Endothelial cell of umbilical vein (primary cell): ENCODE measurements at regions of chr9 and their contacts with region 1.

Region 1: DNA sequence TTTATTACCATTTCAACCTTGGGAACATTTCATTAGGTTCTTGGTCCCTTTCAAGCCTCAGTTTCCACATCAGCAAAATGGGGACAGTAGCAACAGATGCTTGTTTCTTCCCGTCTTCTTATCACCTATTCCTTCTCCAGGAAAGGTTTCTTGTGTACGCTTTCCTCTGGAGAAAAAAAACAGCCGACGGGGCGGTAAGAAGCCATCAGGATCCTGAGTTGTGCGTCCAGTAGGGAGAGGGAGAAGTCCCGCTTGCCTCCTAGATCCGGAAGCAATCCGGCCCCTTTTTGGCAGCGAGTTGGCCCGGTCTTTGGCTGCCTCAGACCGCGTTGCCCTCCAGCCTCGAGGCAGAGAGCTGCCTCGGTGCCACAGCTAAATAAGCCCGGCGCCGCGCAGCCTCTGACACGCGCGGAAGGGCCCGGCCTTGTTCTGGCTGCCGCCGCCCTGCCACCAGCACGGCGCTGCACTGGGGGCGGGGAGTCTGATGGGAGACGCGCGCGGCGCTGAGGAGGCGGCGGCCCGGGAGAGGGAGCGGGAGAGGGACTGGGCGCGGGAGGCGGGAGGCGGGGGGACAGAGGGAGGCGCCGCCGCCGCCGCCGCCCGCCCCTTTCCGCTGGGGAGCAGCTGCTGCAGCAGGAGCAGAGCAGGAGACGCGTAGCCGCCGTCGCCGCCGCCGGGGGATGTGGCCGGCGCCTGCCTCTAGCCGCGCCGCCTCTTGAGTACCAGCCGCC is at the start of gene SLC44A1:
- DNase-seq: peak; percentile 96
- H3K4me3 ChIP-seq: peak within 1 kb of the TSS; percentile 69 to 90 (median 72)
- H3K27ac ChIP-seq: peak within 1 kb of the TSS; percentile 95
- H3K4me1 ChIP-seq: peaks cover 28% of the 10 kb centered on the region
- H3K27me3 ChIP-seq: no peaks in the 10 kb centered on the region
- CTCF ChIP-seq: no peak
- POLR2A ChIP-seq: peak; percentile 62
- total RNA-seq, gene SLC44A1: 35.3 and 37.7 TPM in 2 replicates

Region 2: GRCh38 chr9:104765138-104765537 is 479.0 kb before region 1 on chr9:
- CTCF ChIA-PET with region 1: no interaction called
- POLR2A ChIA-PET with region 1: no interaction called
- dilution Hi-C with region 1: no loop called
- intact Hi-C with region 1: loop called (anchors 5 kb)
- DNase-seq: no peak
- H3K4me3 ChIP-seq: no peak overlapping the region
- H3K27ac ChIP-seq: no peak overlapping the region
- H3K4me1 ChIP-seq: peaks cover 6% of the 10 kb centered on the region
- H3K27me3 ChIP-seq: no peaks in the 10 kb centered on the region
- CTCF ChIP-seq: no peak
- POLR2A ChIP-seq: no peak

Region 3: GRCh38 chr9:104991144-104991953 is 252.8 kb before region 1 on chr9:
- CTCF ChIA-PET with region 1: no interaction called
- POLR2A ChIA-PET with region 1: no interaction called
- dilution Hi-C with region 1: no loop called
- intact Hi-C with region 1: loop called (anchors 5 kb)
- DNase-seq: peak; percentile 83
- H3K4me3 ChIP-seq: peak overlapping the region; percentile 61 to 83 (median 76)
- H3K27ac ChIP-seq: peak overlapping the region; percentile 34
- H3K4me1 ChIP-seq: peaks cover 4% of the 10 kb centered on the region
- H3K27me3 ChIP-seq: no peaks in the 10 kb centered on the region
- CTCF ChIP-seq: no peak
- POLR2A ChIP-seq: peak; percentile 50

Region 4: DNA sequence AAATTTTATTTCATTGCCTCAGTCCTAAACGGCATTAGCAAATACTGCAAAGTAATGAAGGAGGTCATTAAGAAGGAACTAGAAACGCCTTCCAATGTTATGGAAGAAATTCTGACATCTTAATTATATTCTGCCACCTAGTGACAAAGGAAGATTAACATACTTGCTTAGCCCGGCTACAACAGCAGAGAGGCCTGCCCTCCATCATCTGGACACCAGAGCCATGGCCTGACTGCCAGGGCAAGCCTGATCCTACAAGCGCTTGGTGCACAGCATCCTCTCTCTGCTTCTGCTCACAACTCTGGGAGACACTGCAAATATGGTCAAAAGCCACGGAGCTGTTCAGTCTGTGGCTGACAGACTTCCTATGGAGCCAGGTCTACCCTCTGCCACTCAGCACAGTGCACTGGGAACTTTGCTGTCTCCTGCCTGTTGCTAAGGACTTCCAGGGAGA is 87.0 kb before region 1 on chr9:
- CTCF ChIA-PET with region 1: no interaction called
- POLR2A ChIA-PET with region 1: no interaction called
- dilution Hi-C with region 1: no loop called
- intact Hi-C with region 1: loop called (anchors 2 kb)
- DNase-seq: peak; percentile 63
- H3K4me3 ChIP-seq: no peak overlapping the region
- H3K27ac ChIP-seq: no peak overlapping the region
- H3K4me1 ChIP-seq: no peaks in the 10 kb centered on the region
- H3K27me3 ChIP-seq: no peaks in the 10 kb centered on the region
- CTCF ChIP-seq: peak; percentile 22 to 40
- POLR2A ChIP-seq: no peak

Region 5: DNA sequence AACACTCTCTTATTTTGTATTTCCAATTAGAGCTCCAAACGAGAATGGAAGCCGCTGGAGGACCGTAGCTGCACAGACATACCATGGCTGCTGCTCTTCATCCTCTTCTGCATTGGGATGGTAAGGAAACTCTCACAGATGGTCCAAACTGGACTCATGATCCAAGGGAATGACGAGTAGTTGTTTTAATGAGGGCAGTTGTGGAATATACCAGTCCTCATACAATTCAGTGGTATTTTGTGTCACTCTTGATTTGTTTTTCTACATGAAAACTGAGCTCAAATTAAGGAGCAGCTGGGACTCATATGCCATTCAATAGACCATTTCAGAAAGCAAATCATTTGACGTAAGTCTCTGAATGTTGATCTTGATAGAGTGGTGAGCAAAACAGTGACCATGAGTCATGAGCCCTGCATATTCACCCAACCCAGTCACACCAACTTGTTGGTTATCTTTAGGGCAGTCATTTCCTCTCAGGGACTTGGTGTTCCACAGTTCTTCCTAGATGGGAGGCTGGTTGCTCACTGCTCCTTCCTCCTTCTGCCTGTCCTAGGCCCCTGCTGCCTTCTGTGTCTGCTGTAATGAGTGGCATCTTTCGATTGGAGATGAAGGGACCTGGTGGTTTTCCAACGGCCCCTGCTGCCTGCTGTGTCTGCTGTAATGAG is 55.2 kb after region 1 on chr9:
- CTCF ChIA-PET with region 1: interaction called, 3 read pairs
- POLR2A ChIA-PET with region 1: interaction called, 5 read pairs
- dilution Hi-C with region 1: no loop called
- intact Hi-C with region 1: loop called (anchors 1 kb)
- DNase-seq: peak; percentile 98
- H3K4me3 ChIP-seq: no peak overlapping the region
- H3K27ac ChIP-seq: peak overlapping the region; percentile 96
- H3K4me1 ChIP-seq: peaks cover 45% of the 10 kb centered on the region
- H3K27me3 ChIP-seq: no peaks in the 10 kb centered on the region
- CTCF ChIP-seq: no peak
- POLR2A ChIP-seq: peak; percentile 69

Region 6: DNA sequence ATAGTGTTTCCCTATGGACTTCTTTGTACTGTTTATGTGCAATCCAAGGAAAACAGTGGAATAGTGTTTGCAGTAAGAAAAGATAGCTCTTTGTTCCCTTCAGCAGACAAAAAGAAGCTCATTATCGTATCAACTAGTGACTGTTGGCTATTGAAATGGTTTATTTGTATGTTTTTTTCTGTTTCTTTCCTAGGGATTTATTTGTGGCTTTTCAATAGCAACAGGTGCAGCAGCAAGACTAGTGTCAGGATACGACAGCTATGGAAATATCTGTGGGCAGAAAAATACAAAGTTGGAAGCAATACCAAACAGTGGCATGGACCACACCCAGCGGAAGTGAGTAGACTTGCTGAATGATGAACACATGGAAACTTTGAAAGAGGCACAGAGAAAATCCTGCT is 65.4 kb after region 1 on chr9:
- CTCF ChIA-PET with region 1: no interaction called
- POLR2A ChIA-PET with region 1: no interaction called
- dilution Hi-C with region 1: no loop called
- intact Hi-C with region 1: loop called (anchors 1 kb)
- DNase-seq: peak; percentile 74
- H3K4me3 ChIP-seq: no peak overlapping the region
- H3K27ac ChIP-seq: peak overlapping the region; percentile 4
- H3K4me1 ChIP-seq: peaks cover 22% of the 10 kb centered on the region
- H3K27me3 ChIP-seq: no peaks in the 10 kb centered on the region
- CTCF ChIP-seq: no peak
- POLR2A ChIP-seq: no peak

Region 7: DNA sequence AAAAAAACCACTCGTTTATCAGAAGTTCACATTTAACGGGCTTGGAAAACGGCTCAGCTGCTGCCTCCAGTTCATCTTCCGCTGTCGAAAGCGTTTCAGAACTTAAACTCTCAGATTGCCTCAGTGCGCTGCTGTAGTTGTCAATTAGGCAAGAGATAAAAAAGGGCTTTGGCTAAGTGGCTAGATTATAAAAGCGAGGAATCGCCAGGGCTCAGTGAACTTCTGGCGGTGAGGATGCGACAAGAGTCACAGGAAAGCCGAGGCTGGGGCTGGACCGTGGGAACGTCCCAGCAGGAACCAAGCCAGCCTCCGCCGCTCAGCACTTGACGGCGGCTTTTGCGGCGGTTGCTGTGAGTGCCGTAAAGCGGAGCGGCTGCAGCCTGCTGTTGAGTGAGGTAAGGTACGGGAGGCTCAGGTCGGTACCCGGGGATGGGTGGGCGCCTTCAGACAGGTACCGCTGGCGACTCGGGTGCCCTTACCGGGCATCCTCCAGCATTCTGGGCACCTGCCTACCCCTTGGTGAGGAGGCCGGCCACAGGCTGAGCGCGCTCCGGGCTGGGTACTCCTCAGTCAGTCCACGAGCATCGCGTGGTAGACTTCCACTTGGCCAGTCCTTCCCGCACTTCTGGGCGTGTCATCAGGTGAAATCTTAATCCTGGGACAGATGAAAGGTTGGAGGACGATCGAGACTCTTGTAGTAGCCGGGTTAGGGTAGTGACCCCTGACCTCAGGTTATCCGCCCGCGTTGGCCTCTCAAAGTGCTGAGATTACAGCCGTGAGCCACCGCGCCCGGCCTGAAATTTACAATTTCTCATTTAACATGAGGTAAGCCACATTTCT is 313.8 kb after region 1 on chr9 and contains the start of gene FKTN:
- CTCF ChIA-PET with region 1: no interaction called
- POLR2A ChIA-PET with region 1: no interaction called
- dilution Hi-C with region 1: no loop called
- intact Hi-C with region 1: loop called (anchors 5 kb)
- DNase-seq: peak; percentile 92
- H3K4me3 ChIP-seq: peak within 1 kb of the TSS; percentile 52 to 87 (median 67)
- H3K27ac ChIP-seq: peak within 1 kb of the TSS; percentile 27
- H3K4me1 ChIP-seq: peaks cover 9% of the 10 kb centered on the region
- H3K27me3 ChIP-seq: no peaks in the 10 kb centered on the region
- CTCF ChIP-seq: no peak
- POLR2A ChIP-seq: peak; percentile 71
- total RNA-seq, gene FKTN: 13.2 and 14.4 TPM in 2 replicates